Heart left ventricle (tissue), 16 donors: ENCODE measurements at regions of chr3 and their contacts with region 1.

Region 1: GRCh38 chr3:105868742-105869530 is at the start of gene CBLB:
- DNase-seq: peak; percentile 93 to 96 (median 95)
- ATAC-seq: peak; percentile 92 to 97 (median 94)
- H3K4me3 ChIP-seq: peak within 1 kb of the TSS; percentile 69 to 98 (median 91)
- H3K27ac ChIP-seq: peak within 1 kb of the TSS; percentile 89 to 99 (median 98)
- H3K4me1 ChIP-seq: peaks cover 0 to 51% (median 36%) of the 10 kb centered on the region in 12 donors
- H3K27me3 ChIP-seq: no peaks in the 10 kb centered on the region
- CTCF ChIP-seq: no peak
- POLR2A ChIP-seq: peak; percentile 75 to 95
- total RNA-seq, gene CBLB: 30.0 to 74.4 (median 44.8) TPM

Region 2: GRCh38 chr3:105686278-105686897 is 182.5 kb before region 1 on chr3:
- intact Hi-C with region 1: loop called in 7 of 10 experiments (anchors 5 to 10 kb)
- DNase-seq: no peak
- ATAC-seq: peak in 1 of 4 donors; percentile 29
- H3K4me3 ChIP-seq: no peak overlapping the region
- H3K27ac ChIP-seq: peak overlapping the region in 1 of 12 donors; percentile 27
- H3K4me1 ChIP-seq: peaks cover 0 to 37% (median 12%) of the 10 kb centered on the region in 12 donors
- H3K27me3 ChIP-seq: no peaks in the 10 kb centered on the region
- CTCF ChIP-seq: peak; percentile 60 to 89 (median 84)
- POLR2A ChIP-seq: no peak

Region 3: DNA sequence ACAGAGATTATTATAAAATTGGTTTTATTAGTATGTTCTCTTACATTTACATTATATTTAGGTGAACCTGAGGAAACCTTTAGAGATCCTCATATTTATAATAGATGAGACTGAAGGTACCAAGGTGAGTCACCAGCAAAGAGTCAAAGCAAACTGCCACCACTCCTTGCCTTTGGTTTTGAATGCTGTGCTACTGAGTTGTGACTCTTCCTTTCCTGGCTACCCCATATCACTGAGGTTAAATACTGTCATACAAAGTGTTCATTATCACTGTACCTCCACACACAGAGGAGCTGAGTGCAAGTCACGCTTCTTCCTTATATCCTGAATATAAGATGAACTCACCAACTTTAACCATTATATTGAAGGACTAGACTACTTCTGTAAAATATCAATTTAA is 168.4 kb before region 1 on chr3:
- intact Hi-C with region 1: loop called in 5 of 10 experiments (anchors 10 kb)
- DNase-seq: no peak
- ATAC-seq: no peak
- H3K4me3 ChIP-seq: no peak overlapping the region
- H3K27ac ChIP-seq: no peak overlapping the region
- H3K4me1 ChIP-seq: peaks cover 0 to 7% (median 0%) of the 10 kb centered on the region in 12 donors
- H3K27me3 ChIP-seq: no peaks in the 10 kb centered on the region
- CTCF ChIP-seq: no peak
- POLR2A ChIP-seq: no peak

Region 4: GRCh38 chr3:105764378-105765307 is 104.3 kb before region 1 on chr3:
- intact Hi-C with region 1: no loop called
- DNase-seq: no peak
- ATAC-seq: peak in 1 of 4 donors; percentile 21
- H3K4me3 ChIP-seq: no peak overlapping the region
- H3K27ac ChIP-seq: peak overlapping the region in 1 of 12 donors; percentile 39
- H3K4me1 ChIP-seq: peaks cover 0 to 42% (median 21%) of the 10 kb centered on the region in 12 donors
- H3K27me3 ChIP-seq: no peaks in the 10 kb centered on the region
- CTCF ChIP-seq: no peak
- POLR2A ChIP-seq: no peak

Region 5: DNA sequence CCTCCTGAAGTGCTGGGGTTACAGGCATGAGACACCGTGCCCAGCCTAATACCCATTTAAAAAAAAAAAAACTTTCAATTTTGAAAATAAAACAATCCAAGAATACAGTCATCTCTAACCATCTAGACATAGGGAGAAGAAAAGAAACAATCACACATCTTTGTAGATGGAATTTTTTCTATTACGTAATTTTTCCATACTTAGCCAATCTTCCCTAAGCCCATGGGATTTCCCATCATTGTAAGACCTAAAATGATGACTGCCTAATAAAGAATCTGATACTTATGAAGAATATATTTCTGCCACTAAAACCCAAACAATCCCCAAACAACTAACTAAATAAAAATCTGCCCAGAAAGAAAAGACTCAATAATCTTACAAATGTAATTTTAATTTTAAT is 88.8 kb before region 1 on chr3:
- intact Hi-C with region 1: loop called in 1 of 10 experiments (anchors 10 kb)
- DNase-seq: no peak
- ATAC-seq: no peak
- H3K4me3 ChIP-seq: no peak overlapping the region
- H3K27ac ChIP-seq: no peak overlapping the region
- H3K4me1 ChIP-seq: peaks cover 0 to 38% (median 8%) of the 10 kb centered on the region in 12 donors
- H3K27me3 ChIP-seq: no peaks in the 10 kb centered on the region
- CTCF ChIP-seq: no peak
- POLR2A ChIP-seq: no peak

Region 6: DNA sequence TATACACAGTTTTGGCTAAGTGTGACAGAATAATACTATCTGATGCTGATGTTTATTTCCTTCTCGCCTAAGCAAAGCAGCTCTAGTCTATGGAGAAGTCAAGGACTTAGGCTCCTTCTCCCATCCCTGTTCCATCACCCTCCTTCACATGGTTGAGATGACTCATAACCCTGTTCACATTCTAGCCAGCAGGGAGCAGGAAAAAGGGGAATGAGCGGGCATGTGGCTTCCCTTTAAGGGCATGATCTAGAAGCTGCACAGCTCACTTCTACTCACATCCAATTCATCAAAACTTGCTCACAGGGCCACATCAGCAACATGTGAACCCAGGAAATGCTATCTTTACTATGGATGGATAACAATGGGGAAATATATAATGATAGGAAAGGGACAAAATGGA is 41.0 kb before region 1 on chr3:
- intact Hi-C with region 1: loop called in 3 of 10 experiments (anchors 5 kb)
- DNase-seq: peak in 2 of 5 donors; percentile 33 to 35
- ATAC-seq: peak; percentile 12 to 76 (median 72)
- H3K4me3 ChIP-seq: no peak overlapping the region
- H3K27ac ChIP-seq: peak overlapping the region in 9 of 12 donors; percentile 20 to 75 (median 43)
- H3K4me1 ChIP-seq: peaks cover 8 to 92% (median 57%) of the 10 kb centered on the region in 12 donors
- H3K27me3 ChIP-seq: no peaks in the 10 kb centered on the region
- CTCF ChIP-seq: peak in 4 of 12 donors; percentile 8 to 38 (median 26)
- POLR2A ChIP-seq: no peak

Region 7: GRCh38 chr3:105933871-105934270 is 64.9 kb after region 1 on chr3:
- intact Hi-C with region 1: no loop called
- DNase-seq: no peak
- ATAC-seq: peak in 1 of 4 donors; percentile 33
- H3K4me3 ChIP-seq: no peak overlapping the region
- H3K27ac ChIP-seq: no peak overlapping the region
- H3K4me1 ChIP-seq: peaks cover 0 to 23% (median 9%) of the 10 kb centered on the region in 12 donors
- H3K27me3 ChIP-seq: no peaks in the 10 kb centered on the region
- CTCF ChIP-seq: no peak
- POLR2A ChIP-seq: no peak

Region 8: DNA sequence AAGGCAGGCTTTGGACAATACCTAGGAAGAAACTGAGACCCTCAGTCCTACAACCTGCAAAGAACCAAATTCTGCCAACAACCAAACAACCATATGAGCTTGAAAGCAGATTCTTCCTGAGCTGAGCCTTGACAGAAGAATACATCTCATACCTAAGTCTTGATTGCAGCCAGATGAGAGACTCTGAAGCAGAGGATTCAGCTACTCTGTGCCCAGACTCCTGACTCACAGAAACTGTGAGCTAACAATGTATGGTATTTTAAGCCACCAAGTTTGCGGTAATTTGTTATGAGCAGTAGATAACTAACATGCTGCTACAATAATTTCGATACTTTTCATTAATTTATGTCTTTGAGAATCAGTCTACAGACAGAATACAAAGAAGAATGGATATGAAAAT is 324.9 kb after region 1 on chr3:
- intact Hi-C with region 1: loop called in 1 of 10 experiments (anchors 10 kb)
- DNase-seq: no peak
- ATAC-seq: no peak
- H3K4me3 ChIP-seq: no peak overlapping the region
- H3K27ac ChIP-seq: no peak overlapping the region
- H3K4me1 ChIP-seq: no peaks in the 10 kb centered on the region
- H3K27me3 ChIP-seq: no peaks in the 10 kb centered on the region
- CTCF ChIP-seq: no peak
- POLR2A ChIP-seq: no peak

Region 9: DNA sequence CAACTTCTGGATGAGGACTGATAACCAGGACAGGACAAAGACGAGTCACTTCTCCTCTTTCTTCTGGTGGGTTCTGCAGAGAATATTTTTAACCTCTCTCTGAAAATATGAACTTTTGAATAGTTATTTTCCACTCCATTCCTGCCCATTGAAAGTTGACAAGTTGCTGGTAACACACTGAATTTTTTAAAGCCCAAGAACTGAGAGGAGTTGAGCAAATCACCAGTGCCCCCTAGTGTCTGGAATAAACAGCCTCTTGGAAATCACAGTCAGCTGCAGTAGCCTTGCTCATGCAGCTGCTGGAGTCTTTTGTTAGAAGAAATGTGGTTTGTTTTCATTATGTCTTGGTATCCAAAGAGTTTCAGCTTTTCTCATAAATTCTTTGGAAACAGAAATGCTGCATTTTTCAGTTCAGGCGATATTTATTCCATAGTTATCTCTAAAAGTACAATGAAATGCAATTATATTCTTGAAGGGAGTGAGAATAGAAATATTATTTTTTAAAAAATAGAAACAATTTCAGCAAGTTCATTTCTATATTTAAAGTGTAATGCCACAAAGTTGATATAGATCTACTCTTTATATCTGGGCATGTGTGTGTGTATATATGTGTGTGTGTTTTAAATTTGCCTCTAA is 740.8 kb after region 1 on chr3:
- intact Hi-C with region 1: loop called in 1 of 10 experiments (anchors 10 kb)
- DNase-seq: peak in 4 of 5 donors; percentile 27 to 64 (median 46)
- ATAC-seq: peak; percentile 37 to 85 (median 79)
- H3K4me3 ChIP-seq: no peak overlapping the region
- H3K27ac ChIP-seq: no peak overlapping the region
- H3K4me1 ChIP-seq: peaks cover 0 to 9% (median 0%) of the 10 kb centered on the region in 12 donors
- H3K27me3 ChIP-seq: no peaks in the 10 kb centered on the region
- CTCF ChIP-seq: peak; percentile 70 to 93 (median 84)
- POLR2A ChIP-seq: no peak